KBM-7 (cell line): ENCODE measurements at regions of chrX and their contacts with region 1.

Region 1: DNA sequence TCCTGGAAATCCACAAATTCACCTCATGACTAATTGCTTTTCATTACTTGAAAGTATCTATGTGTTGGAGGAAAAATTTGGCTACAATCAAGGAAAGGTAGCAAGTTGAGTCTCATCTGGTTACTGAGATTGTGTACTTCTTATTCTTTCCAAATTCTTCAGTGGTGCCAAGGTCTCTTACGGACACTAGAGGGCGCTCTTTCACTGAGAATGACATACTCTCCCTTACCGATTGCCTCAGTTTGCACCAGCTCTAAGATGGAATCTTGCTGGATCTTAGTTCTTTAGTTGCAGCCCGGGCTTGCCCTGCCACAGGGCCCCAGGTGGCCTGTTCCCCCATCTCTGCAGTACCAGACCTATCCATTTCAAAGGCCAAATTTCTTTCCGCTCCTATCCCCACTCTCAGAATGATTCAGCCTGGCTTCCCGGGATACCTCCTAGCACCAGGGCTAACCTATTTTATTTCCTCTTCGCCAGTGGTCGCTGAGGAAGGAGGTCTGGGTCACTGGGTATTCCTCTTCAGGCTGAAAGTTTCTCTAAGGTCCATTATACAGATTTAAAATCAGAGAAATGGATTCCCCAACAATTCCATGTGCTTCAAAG is 24.6 kb upstream of the GPR50 start:
- DNase-seq: peak; percentile 67

Region 2: GRCh38 chrX:150870487-150871340 is 281.1 kb before region 1 on chrX:
- in situ Hi-C with region 1: no loop called
- DNase-seq: no peak

Region 3: GRCh38 chrX:151680805-151681204 is 529.0 kb after region 1 on chrX:
- in situ Hi-C with region 1: loop called (anchors 25 kb)
- DNase-seq: peak; percentile 72